Naive thymus-derived CD4-positive, alpha-beta T cell (primary cell): ENCODE measurements at regions of chr17 and their contacts with region 1.

Region 1: DNA sequence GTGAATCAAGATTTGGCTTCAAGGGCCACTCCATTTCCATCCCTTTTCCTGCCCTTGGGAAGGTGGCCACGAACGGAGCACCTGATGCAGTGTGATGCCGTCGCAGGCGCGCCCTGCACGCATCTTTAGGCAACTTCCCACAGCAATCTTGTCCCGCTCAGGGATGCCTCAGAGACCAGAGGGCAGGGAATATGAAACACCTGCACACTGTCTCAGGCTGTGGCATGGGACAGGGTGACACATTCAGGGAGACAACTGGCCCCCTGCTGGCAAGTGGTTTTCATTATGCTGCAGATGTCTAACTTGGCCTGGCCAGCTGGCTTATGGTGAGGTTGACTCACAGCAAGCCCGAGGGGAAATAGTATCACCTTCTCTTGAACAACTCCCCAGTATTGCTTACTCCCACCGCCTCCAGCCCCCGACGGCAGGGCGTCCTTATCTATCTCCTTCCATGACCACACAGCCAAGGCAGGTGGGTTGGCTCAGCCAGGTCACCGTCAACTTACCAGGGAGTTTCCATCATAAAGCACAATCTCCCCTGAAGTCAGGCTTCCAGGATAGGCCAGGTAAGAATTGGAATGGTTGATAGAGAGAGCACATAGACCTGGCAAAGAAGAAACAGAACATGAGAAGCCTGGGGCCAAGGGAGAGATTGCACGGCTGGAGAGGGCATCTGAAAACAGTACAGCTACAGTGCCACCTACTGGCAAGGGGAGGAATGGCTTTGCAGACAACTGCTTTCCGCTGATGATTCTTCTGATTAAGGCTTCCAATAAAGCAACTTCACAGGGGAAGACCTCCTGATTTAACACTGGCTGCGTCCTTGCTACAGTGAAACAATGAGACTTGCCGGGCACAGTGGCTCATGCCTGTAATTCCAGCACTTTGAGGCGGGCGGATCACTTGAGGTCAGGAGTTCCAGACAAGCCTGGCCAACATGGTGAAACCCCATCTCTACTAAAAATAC is 21.1 kb downstream of the WIPI1 start:
- DNase-seq: peak; percentile 62 to 87 (median 82)
- ATAC-seq: peak; percentile 90
- H3K4me3 ChIP-seq: no peak overlapping the region
- H3K4me3 Mint-ChIP-seq: peak overlapping the region; percentile 3 to 78 (median 62)
- H3K27ac ChIP-seq: no peak overlapping the region
- H3K27ac Mint-ChIP-seq: peak overlapping the region; percentile 1 to 94 (median 41)
- H3K4me1 ChIP-seq: peaks cover 32% of the 10 kb centered on the region in 2 donors
- H3K4me1 Mint-ChIP-seq: peaks cover 30 to 67% (median 51%) of the 10 kb centered on the region in 7 donors
- H3K27me3 ChIP-seq: no peaks in the 10 kb centered on the region
- H3K27me3 Mint-ChIP-seq: no peaks in the 10 kb centered on the region

Region 2: GRCh38 chr17:68172461-68172954 is 263.7 kb before region 1 on chr17:
- CTCF ChIA-PET with region 1: interaction called, 6 read pairs
- POLR2A ChIA-PET with region 1: no interaction called
- intact Hi-C with region 1: loop called (anchors 1 kb)
- DNase-seq: peak; percentile 45 to 74 (median 67)
- ATAC-seq: peak; percentile 92
- H3K4me3 ChIP-seq: no peak overlapping the region
- H3K4me3 Mint-ChIP-seq: no peak overlapping the region
- H3K27ac ChIP-seq: no peak overlapping the region
- H3K27ac Mint-ChIP-seq: no peak overlapping the region
- H3K4me1 ChIP-seq: peaks cover 0 to 7% of the 10 kb centered on the region in 2 donors
- H3K4me1 Mint-ChIP-seq: peaks cover 14 to 38% (median 20%) of the 10 kb centered on the region in 7 donors
- H3K27me3 ChIP-seq: no peaks in the 10 kb centered on the region
- H3K27me3 Mint-ChIP-seq: peaks cover 0 to 1% (median 0%) of the 10 kb centered on the region in 5 donors

Region 3: GRCh38 chr17:68255731-68256538 is 180.2 kb before region 1 on chr17:
- CTCF ChIA-PET with region 1: interaction called, 5 read pairs
- POLR2A ChIA-PET with region 1: interaction called, 4 read pairs
- intact Hi-C with region 1: loop called in 1 of 2 experiments (anchors 1 kb)
- DNase-seq: peak in 4 of 9 donors; percentile 27 to 44 (median 36)
- ATAC-seq: peak; percentile 32
- H3K4me3 ChIP-seq: peak overlapping the region; percentile 7
- H3K4me3 Mint-ChIP-seq: peak overlapping the region in 9 of 10 donors; percentile 18 to 70 (median 62)
- H3K27ac ChIP-seq: peak overlapping the region; percentile 92
- H3K27ac Mint-ChIP-seq: peak overlapping the region; percentile 77 to 97 (median 93)
- H3K4me1 ChIP-seq: peaks cover 74 to 91% of the 10 kb centered on the region in 2 donors
- H3K4me1 Mint-ChIP-seq: peaks cover 42 to 84% (median 75%) of the 10 kb centered on the region in 7 donors
- H3K27me3 ChIP-seq: no peaks in the 10 kb centered on the region
- H3K27me3 Mint-ChIP-seq: no peaks in the 10 kb centered on the region

Region 4: GRCh38 chr17:68356520-68356919 is 79.6 kb before region 1 on chr17:
- CTCF ChIA-PET with region 1: interaction called, 4 read pairs
- POLR2A ChIA-PET with region 1: interaction called, 3 read pairs
- intact Hi-C with region 1: loop called in 1 of 2 experiments (anchors 2 kb)
- DNase-seq: peak in 8 of 9 donors; percentile 67 to 86 (median 80)
- ATAC-seq: peak; percentile 98
- H3K4me3 ChIP-seq: peak overlapping the region; percentile 33
- H3K4me3 Mint-ChIP-seq: peak overlapping the region; percentile 73 to 86 (median 80)
- H3K27ac ChIP-seq: peak overlapping the region; percentile 24
- H3K27ac Mint-ChIP-seq: peak overlapping the region; percentile 24 to 91 (median 82)
- H3K4me1 ChIP-seq: peaks cover 54 to 56% of the 10 kb centered on the region in 2 donors
- H3K4me1 Mint-ChIP-seq: peaks cover 43 to 69% (median 62%) of the 10 kb centered on the region in 7 donors
- H3K27me3 ChIP-seq: no peaks in the 10 kb centered on the region
- H3K27me3 Mint-ChIP-seq: no peaks in the 10 kb centered on the region

Region 5: DNA sequence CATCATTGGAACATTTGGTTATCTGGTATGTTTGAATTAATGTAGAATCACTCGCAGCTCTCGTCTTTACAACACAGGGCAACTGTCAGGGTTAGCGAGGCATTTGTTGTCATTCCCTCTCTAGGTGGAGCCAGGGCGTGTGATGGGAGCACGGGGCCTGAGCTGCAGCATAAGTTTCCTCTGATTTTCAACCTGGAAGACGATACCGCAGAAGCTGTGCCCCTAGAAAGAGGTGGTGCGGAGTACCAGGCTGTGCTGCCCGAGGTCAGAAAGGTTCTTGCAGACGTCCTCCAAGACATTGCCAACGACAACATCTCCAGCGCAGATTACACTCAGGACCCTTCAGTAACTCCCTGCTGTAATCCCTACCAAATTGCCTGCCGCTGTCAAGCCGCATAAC is 16.1 kb before region 1 on chr17:
- CTCF ChIA-PET with region 1: interaction called, 6 read pairs
- POLR2A ChIA-PET with region 1: interaction called, 8 read pairs
- intact Hi-C with region 1: loop called in 1 of 2 experiments (anchors 2 kb)
- DNase-seq: no peak
- ATAC-seq: no peak
- H3K4me3 ChIP-seq: no peak overlapping the region
- H3K4me3 Mint-ChIP-seq: no peak overlapping the region
- H3K27ac ChIP-seq: no peak overlapping the region
- H3K27ac Mint-ChIP-seq: peak overlapping the region in 2 of 9 donors; percentile 45 to 55
- H3K4me1 ChIP-seq: peaks cover 0 to 9% of the 10 kb centered on the region in 2 donors
- H3K4me1 Mint-ChIP-seq: peaks cover 5 to 30% (median 22%) of the 10 kb centered on the region in 7 donors
- H3K27me3 ChIP-seq: no peaks in the 10 kb centered on the region
- H3K27me3 Mint-ChIP-seq: no peaks in the 10 kb centered on the region

Region 6: DNA sequence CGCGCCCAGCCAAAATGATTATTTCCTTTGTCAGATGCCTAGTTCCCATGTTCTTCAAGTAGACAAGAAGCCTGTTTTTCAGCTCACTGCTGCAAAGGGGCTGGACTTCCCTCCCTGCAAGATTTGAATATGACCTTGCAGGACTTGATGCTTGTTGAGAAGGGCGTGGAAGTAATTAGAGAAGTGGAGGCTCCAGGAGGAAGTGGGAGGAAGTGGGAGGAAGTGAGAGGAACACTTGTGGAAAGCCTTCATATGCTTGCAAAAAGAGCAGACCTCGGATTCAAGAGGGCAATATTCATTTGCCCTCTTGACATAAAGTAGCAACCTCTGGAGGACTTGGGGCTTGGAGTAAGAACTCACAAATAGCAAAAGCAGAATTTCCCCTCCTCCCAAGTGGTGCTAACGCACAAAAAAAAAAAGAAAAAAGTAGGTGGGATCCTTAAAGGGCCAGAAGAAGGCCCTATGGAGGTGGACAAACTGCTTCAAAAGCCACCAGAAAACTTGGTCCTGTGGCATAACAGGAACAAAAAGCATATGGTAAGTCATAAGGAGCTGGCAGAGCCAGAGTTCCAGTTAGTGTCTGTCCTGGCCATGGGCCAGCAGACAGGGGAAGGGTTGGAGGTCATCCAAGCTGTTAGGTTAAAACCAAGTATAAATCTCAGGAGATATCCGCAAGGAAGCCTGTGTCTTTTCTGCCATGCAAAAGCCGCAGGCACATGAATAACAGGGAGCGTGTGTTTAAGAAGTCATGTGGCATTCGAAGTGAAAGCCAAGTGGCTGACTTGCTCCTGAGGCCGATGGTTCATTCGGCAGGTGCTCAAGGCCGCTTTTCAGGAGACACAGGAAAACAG is 55.4 kb after region 1 on chr17:
- CTCF ChIA-PET with region 1: no interaction called
- POLR2A ChIA-PET with region 1: no interaction called
- intact Hi-C with region 1: no loop called
- DNase-seq: no peak
- ATAC-seq: peak; percentile 68
- H3K4me3 ChIP-seq: no peak overlapping the region
- H3K4me3 Mint-ChIP-seq: peak overlapping the region in 1 of 10 donors; percentile 39
- H3K27ac ChIP-seq: no peak overlapping the region
- H3K27ac Mint-ChIP-seq: no peak overlapping the region
- H3K4me1 ChIP-seq: peaks cover 6% of the 10 kb centered on the region in 2 donors
- H3K4me1 Mint-ChIP-seq: peaks cover 10 to 27% (median 13%) of the 10 kb centered on the region in 7 donors
- H3K27me3 ChIP-seq: no peaks in the 10 kb centered on the region
- H3K27me3 Mint-ChIP-seq: peaks cover 0 to 13% (median 0%) of the 10 kb centered on the region in 5 donors

Region 7: DNA sequence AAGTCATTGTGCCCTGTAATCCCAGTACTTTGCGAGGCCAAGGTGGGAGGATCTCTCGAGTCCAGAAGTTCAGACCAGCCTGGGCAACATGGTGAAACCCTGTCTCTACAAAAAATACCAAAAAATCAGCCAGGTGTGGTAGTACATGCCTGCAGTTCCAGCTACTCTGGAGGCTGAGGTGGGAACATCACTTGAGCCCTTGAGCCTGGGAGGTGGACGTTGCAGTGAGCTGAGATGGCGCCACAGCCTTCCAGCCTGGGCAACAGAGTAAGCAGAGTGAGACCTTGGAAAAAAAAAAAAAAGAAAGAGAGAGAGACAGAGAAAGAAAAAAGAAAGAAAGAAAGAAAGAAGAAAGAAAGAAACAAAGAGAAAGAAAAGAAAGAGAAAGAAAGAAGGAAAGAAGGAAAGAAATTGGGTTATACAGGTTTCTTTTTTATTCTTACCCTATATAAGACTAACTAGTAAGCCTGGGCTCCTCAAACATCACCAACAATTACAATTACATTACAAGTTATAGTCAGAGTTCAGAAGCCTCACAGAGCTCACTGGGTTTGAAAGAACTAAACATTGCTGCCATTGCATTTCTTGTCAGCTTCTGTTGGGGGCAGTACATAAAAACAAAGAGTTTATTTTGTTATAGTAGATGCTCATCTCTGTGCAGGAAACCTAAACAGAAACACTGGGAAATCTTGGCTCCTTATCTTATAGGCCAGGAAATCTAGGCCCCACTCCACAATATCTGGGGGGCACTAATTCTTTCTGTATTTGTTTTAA is 631.3 kb after region 1 on chr17:
- CTCF ChIA-PET with region 1: no interaction called
- POLR2A ChIA-PET with region 1: no interaction called
- intact Hi-C with region 1: no loop called
- DNase-seq: no peak
- ATAC-seq: no peak
- H3K4me3 ChIP-seq: no peak overlapping the region
- H3K4me3 Mint-ChIP-seq: no peak overlapping the region
- H3K27ac ChIP-seq: no peak overlapping the region
- H3K27ac Mint-ChIP-seq: peak overlapping the region in 1 of 9 donors; percentile 57
- H3K4me1 ChIP-seq: no peaks in the 10 kb centered on the region
- H3K4me1 Mint-ChIP-seq: peaks cover 6 to 46% (median 32%) of the 10 kb centered on the region in 7 donors
- H3K27me3 ChIP-seq: no peaks in the 10 kb centered on the region
- H3K27me3 Mint-ChIP-seq: peaks cover 6 to 23% (median 13%) of the 10 kb centered on the region in 5 donors